Endothelial cell of umbilical vein (primary cell): ENCODE measurements at regions of chr16 and their contacts with region 1.

Region 1: GRCh38 chr16:72317446-72317845 is 145.5 kb upstream of the PMFBP1 start:
- DNase-seq: no peak
- H3K4me3 ChIP-seq: no peak overlapping the region
- H3K27ac ChIP-seq: no peak overlapping the region
- H3K4me1 ChIP-seq: no peaks in the 10 kb centered on the region
- H3K27me3 ChIP-seq: no peaks in the 10 kb centered on the region
- CTCF ChIP-seq: no peak
- POLR2A ChIP-seq: no peak

Region 2: DNA sequence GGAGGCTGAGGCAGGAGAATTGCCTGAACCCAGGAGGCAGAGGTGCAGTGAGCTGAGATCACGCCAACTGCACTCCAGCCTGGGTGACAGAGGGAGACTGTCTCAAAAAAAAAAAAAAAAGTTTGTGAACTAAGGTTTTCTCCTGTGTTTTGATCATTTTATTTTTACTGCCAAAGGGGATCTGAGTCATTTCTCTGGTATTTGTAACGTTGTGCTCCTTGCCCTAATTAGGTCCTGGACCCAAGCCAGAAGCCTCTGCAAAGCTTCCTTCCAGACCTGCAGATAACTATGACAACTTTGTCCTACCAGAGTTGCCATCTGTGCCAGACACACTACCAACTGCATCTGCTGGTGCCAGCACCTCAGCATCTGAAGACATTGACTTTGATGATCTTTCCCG is 390.1 kb before region 1 on chr16:
- CTCF ChIA-PET with region 1: no interaction called
- POLR2A ChIA-PET with region 1: no interaction called
- dilution Hi-C with region 1: no loop called
- intact Hi-C with region 1: no loop called
- DNase-seq: peak; percentile 90
- H3K4me3 ChIP-seq: no peak overlapping the region
- H3K27ac ChIP-seq: peak overlapping the region; percentile 75
- H3K4me1 ChIP-seq: peaks cover 55% of the 10 kb centered on the region
- H3K27me3 ChIP-seq: no peaks in the 10 kb centered on the region
- CTCF ChIP-seq: no peak
- POLR2A ChIP-seq: peak; percentile 27

Region 3: GRCh38 chr16:72332926-72333325 is 15.5 kb after region 1 on chr16:
- CTCF ChIA-PET with region 1: no interaction called
- POLR2A ChIA-PET with region 1: no interaction called
- dilution Hi-C with region 1: no loop called
- intact Hi-C with region 1: loop called (anchors 1 kb)
- DNase-seq: no peak
- H3K4me3 ChIP-seq: no peak overlapping the region
- H3K27ac ChIP-seq: no peak overlapping the region
- H3K4me1 ChIP-seq: no peaks in the 10 kb centered on the region
- H3K27me3 ChIP-seq: no peaks in the 10 kb centered on the region
- CTCF ChIP-seq: no peak
- POLR2A ChIP-seq: no peak

Region 4: DNA sequence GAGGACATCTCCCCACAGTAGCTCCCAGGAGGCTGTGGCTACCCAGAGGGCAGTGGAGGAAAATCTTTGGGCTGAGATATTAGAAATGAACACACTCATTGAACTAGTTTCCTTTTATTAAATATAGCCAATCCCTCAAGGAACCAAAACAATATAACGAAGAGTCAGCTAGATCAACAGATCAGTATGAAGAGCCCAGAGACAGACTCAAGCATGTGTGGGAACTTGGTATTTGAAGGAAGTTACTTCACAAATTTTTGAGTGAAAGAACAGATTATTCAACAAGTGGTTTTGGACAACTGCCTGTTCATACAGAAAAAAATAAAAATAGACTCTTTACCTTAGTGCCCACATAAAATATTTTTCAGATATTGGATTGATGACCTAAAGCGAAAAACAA is 38.1 kb after region 1 on chr16:
- CTCF ChIA-PET with region 1: no interaction called
- POLR2A ChIA-PET with region 1: no interaction called
- dilution Hi-C with region 1: no loop called
- intact Hi-C with region 1: no loop called
- DNase-seq: no peak
- H3K4me3 ChIP-seq: no peak overlapping the region
- H3K27ac ChIP-seq: no peak overlapping the region
- H3K4me1 ChIP-seq: no peaks in the 10 kb centered on the region
- H3K27me3 ChIP-seq: no peaks in the 10 kb centered on the region
- CTCF ChIP-seq: no peak
- POLR2A ChIP-seq: no peak